Activated T-helper 1 cell treated with anti-CD3 and anti-CD28 coated beads, Interleukin-12 subunit alpha, Interleukin-12 subunit beta, Interleukin-2, Interleukin-4 antibody, amounts not matched to agents 30 ng/mL and 10 ng/mL and 1 ng/mL, durations not matched to agents 14 hours and 24 hours and 36 hours (primary cell): ENCODE measurements at regions of chr7 and their contacts with region 1.

Region 1: DNA sequence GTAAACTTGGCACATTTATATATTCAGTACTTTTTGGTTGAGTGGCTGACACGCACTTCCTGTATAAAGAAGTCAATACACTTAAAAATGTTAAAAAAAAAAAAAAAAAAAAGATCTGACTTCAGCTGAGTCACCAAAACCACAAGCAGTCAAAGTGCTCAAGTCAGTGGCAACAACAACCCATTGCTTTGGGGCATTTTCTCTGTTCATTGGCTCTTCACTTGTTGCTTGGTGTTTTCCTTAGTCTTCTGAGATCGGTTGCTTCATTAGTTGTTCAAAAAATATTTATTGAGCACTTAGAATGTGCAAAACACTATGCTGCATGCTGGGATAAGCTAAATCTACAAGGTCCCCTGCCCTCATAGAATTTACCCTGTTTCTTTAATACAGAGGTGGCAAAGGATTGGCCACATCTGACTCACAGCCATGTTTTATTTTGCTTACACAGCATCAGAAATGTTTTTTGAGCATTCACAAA is 63.7 kb downstream of the ZNRF2 start:
- DNase-seq: peak; percentile 53
- H3K4me3 Mint-ChIP-seq: peak overlapping the region; percentile 38
- H3K27ac Mint-ChIP-seq: peak overlapping the region; percentile 81
- H3K4me1 Mint-ChIP-seq: peaks cover 65% of the 10 kb centered on the region
- H3K27me3 Mint-ChIP-seq: peaks cover 2% of the 10 kb centered on the region

Region 2: GRCh38 chr7:30134611-30135545 is 213.2 kb before region 1 on chr7 and contains the start of gene MTURN:
- intact Hi-C with region 1: loop called (anchors 1 kb)
- DNase-seq: peak; percentile 83
- H3K4me3 Mint-ChIP-seq: peak within 1 kb of the TSS; percentile 89
- H3K27ac Mint-ChIP-seq: peak within 1 kb of the TSS; percentile 80
- H3K4me1 Mint-ChIP-seq: peaks cover 6% of the 10 kb centered on the region
- H3K27me3 Mint-ChIP-seq: peaks cover 17% of the 10 kb centered on the region
- total RNA-seq, gene MTURN: 3.9 and 4.3 TPM in 2 replicates

Region 3: GRCh38 chr7:30276203-30276900 is 71.8 kb before region 1 on chr7:
- intact Hi-C with region 1: loop called (anchors 1 kb)
- DNase-seq: peak; percentile 28
- H3K4me3 Mint-ChIP-seq: no peak overlapping the region
- H3K27ac Mint-ChIP-seq: no peak overlapping the region
- H3K4me1 Mint-ChIP-seq: peaks cover 8% of the 10 kb centered on the region
- H3K27me3 Mint-ChIP-seq: peaks cover 4% of the 10 kb centered on the region

Region 4: GRCh38 chr7:30322271-30323005 is 25.7 kb before region 1 on chr7:
- intact Hi-C with region 1: loop called (anchors 1 kb)
- DNase-seq: peak; percentile 11
- H3K4me3 Mint-ChIP-seq: peak overlapping the region; percentile 84
- H3K27ac Mint-ChIP-seq: peak overlapping the region; percentile 94
- H3K4me1 Mint-ChIP-seq: peaks cover 59% of the 10 kb centered on the region
- H3K27me3 Mint-ChIP-seq: no peaks in the 10 kb centered on the region

Region 5: GRCh38 chr7:30366606-30367005 is 18.5 kb after region 1 on chr7:
- intact Hi-C with region 1: no loop called
- DNase-seq: no peak
- H3K4me3 Mint-ChIP-seq: no peak overlapping the region
- H3K27ac Mint-ChIP-seq: no peak overlapping the region
- H3K4me1 Mint-ChIP-seq: peaks cover 7% of the 10 kb centered on the region
- H3K27me3 Mint-ChIP-seq: no peaks in the 10 kb centered on the region

Region 6: DNA sequence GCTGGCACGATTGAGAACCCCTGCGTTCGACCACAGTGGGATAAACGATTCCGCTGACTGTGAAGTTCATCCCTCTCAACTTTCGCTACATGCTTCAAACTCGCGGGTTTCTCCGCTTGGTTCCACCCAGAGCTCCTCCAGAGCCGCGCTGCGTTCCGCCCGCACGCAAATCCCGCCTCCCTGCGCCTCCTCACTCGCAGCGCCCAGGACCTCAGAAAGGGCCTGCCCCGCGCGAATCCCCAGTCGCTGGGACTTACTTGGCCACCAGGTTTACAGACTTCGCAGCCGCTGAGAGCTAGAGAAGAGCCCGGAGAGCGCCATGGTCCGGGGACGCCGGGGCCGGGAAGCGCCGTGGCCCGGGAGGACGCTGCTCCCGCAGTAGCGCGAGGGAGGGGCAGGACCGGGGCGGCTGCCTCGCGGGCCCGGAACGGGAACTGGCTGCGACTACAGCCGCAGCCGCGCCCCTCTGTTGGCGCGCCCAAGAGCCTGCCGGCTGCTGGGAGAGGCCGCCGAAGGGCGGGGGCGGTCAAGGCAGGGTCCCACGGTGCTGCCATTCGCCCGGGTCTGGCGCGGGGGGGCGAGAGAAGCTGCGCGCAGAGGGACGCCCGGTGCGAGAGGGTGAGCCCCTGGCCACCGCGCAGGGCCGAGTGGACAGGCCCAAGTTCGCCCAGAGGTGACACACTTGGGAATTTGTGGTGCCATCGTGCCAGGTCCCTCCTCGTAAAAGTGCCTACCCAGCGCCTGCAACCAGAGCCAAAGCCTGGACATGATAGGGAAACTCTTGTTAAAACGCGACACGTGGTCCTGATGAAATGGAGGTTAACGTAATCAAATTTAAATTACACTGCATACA is 130.5 kb after region 1 on chr7 and contains the start of gene NOD1:
- intact Hi-C with region 1: loop called (anchors 2 kb)
- DNase-seq: peak; percentile 71
- H3K4me3 Mint-ChIP-seq: peak within 1 kb of the TSS; percentile 90
- H3K27ac Mint-ChIP-seq: peak within 1 kb of the TSS; percentile 91
- H3K4me1 Mint-ChIP-seq: peaks cover 61% of the 10 kb centered on the region
- H3K27me3 Mint-ChIP-seq: no peaks in the 10 kb centered on the region
- total RNA-seq, gene NOD1: 9.1 and 13.1 TPM in 2 replicates

Region 7: DNA sequence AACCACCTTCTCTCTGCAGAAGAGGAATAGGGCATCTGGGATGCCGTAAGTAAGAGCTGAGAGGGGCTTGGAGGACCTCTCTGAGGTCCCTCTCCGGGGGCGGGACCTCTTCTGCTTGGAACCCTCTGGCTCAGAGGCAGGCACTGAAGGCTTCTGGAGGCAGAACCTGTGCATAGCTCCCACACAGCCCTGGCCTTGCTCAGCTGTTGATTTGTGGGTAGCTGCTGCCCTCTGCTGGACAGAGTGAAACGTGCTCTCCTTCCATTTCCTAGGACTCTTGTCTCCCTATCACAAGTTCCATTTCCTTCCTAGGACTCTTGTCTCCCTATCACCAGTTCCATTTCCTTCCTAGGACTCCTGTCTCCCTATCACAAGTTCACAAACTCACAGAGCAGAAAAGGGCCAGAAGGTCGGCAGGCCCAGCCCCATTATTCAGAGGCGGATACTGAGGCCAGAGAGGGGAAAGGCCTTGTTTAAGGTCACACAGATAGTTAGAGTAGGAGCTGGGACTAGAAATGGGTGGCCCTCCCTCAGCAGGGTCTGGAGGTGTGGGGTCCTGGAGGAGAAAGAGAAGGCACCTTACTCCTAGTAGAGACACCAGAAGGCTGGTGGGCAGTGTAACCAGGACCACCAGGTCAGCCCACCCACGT is 216.2 kb after region 1 on chr7:
- intact Hi-C with region 1: loop called (anchors 5 kb)
- DNase-seq: peak; percentile 65
- H3K4me3 Mint-ChIP-seq: no peak overlapping the region
- H3K27ac Mint-ChIP-seq: peak overlapping the region; percentile 13
- H3K4me1 Mint-ChIP-seq: no peaks in the 10 kb centered on the region
- H3K27me3 Mint-ChIP-seq: no peaks in the 10 kb centered on the region